CD4-positive, alpha-beta memory T cell (primary cell): ENCODE measurements at regions of chr2 and their contacts with region 1.

Region 1: DNA sequence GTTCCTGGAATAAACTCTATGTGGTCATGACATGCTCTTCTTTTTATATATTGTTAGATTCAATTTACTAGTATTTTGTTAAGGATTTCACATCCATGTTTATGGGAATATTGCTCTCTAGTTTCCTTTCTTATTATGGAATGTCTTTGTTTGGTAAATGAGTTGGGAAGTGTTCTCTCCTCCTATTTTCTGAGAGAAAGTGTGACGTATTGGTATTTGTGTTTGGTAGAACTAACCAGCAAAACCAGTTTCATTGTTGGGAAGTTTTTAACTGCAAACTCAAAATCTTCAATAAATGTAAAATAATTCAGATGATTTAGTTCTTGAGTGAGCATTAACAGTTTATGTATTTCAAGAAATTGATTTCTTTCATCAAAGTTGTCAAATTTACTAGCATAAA is 11.4 kb upstream of the LNPK start:
- DNase-seq: no peak
- H3K4me3 ChIP-seq: no peak overlapping the region
- H3K4me3 Mint-ChIP-seq: no peak overlapping the region
- H3K27ac ChIP-seq: no peak overlapping the region
- H3K27ac Mint-ChIP-seq: no peak overlapping the region
- H3K4me1 ChIP-seq: no peaks in the 10 kb centered on the region
- H3K4me1 Mint-ChIP-seq: no peaks in the 10 kb centered on the region
- H3K27me3 ChIP-seq: no peaks in the 10 kb centered on the region
- H3K27me3 Mint-ChIP-seq: peaks cover 8 to 14% of the 10 kb centered on the region in 2 donors

Region 2: GRCh38 chr2:175976391-175977157 is 36.9 kb before region 1 on chr2:
- CTCF ChIA-PET with region 1: no interaction called
- POLR2A ChIA-PET with region 1: no interaction called
- intact Hi-C with region 1: loop called (anchors 5 kb)
- DNase-seq: no peak
- H3K4me3 ChIP-seq: no peak overlapping the region
- H3K4me3 Mint-ChIP-seq: no peak overlapping the region
- H3K27ac ChIP-seq: no peak overlapping the region
- H3K27ac Mint-ChIP-seq: no peak overlapping the region
- H3K4me1 ChIP-seq: no peaks in the 10 kb centered on the region
- H3K4me1 Mint-ChIP-seq: peaks cover 0 to 3% (median 1%) of the 10 kb centered on the region in 4 donors
- H3K27me3 ChIP-seq: no peaks in the 10 kb centered on the region
- H3K27me3 Mint-ChIP-seq: no peaks in the 10 kb centered on the region

Region 3: GRCh38 chr2:176669398-176670174 is 656.1 kb after region 1 on chr2:
- CTCF ChIA-PET with region 1: no interaction called
- POLR2A ChIA-PET with region 1: no interaction called
- intact Hi-C with region 1: no loop called
- DNase-seq: no peak
- H3K4me3 ChIP-seq: no peak overlapping the region
- H3K4me3 Mint-ChIP-seq: no peak overlapping the region
- H3K27ac ChIP-seq: no peak overlapping the region
- H3K27ac Mint-ChIP-seq: no peak overlapping the region
- H3K4me1 ChIP-seq: no peaks in the 10 kb centered on the region
- H3K4me1 Mint-ChIP-seq: no peaks in the 10 kb centered on the region
- H3K27me3 ChIP-seq: no peaks in the 10 kb centered on the region
- H3K27me3 Mint-ChIP-seq: peaks cover 10 to 11% of the 10 kb centered on the region in 2 donors